GM12878 (cell line): ENCODE measurements at regions of chr15 and their contacts with region 1.

Region 1: DNA sequence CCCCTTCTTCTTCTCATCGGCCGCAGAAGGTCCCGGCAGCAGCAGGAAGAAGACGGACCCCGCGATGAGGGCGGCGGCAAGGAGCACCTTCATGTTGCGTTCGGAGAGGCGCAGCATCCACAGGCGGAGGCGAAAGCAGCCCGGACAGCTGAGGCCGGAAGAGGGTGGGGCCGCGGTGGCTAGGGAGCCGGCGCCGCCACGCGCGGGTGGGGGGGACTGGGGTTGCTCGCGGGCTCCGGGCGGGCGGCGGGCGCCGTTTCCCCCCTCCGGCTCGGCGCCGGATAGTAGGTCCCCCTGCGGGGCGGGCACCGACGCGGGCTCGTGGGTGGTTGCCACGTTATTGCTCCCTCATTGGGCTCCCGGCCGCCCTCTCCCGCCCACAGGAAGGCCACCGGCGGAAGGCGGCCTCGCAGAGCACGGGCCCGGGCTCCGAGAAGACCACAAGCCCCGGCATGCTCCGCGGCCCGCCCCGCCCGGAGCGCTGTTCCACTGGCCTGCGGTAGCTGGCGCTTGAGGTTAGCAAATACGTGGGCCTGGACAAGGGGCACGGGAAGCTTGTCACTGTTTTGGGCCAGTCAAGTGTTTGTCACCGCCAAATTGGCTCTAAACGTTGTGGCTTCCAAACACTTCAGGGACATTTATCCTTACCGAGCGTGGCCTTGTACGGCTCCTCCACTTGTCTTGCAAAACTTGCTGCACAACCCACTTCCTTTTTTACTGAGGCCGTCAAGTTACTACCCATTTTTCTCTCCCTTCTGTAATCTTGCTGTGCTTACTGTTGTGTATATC is at the start of gene PPIB:
- DNase-seq: peak; percentile 91
- ATAC-seq: peak; percentile 95
- H3K4me3 ChIP-seq: peak within 1 kb of the TSS; percentile 84
- H3K27ac ChIP-seq: peak within 1 kb of the TSS; percentile 81
- H3K4me1 ChIP-seq: peaks cover 30% of the 10 kb centered on the region
- H3K27me3 ChIP-seq: no peaks in the 10 kb centered on the region
- CTCF ChIP-seq: peak; percentile 47 to 73 (median 54)
- EP300 ChIP-seq: no peak
- POLR2A ChIP-seq: peak; percentile 99
- RAD21 ChIP-seq: peak; percentile 67
- polyA plus RNA-seq, gene PPIB: 831 to 858 TPM

Region 2: GRCh38 chr15:64066475-64066874 is 96.6 kb before region 1 on chr15:
- CTCF ChIA-PET with region 1: no interaction called
- POLR2A ChIA-PET with region 1: no interaction called
- RAD21 ChIA-PET with region 1: no interaction called
- SMC1A ChIA-PET with region 1: no interaction called
- in situ Hi-C with region 1: no loop called
- intact Hi-C with region 1: no loop called
- DNase-seq: no peak
- ATAC-seq: no peak
- H3K4me3 ChIP-seq: no peak overlapping the region
- H3K27ac ChIP-seq: no peak overlapping the region
- H3K4me1 ChIP-seq: peaks cover 13% of the 10 kb centered on the region
- H3K27me3 ChIP-seq: no peaks in the 10 kb centered on the region
- CTCF ChIP-seq: no peak
- EP300 ChIP-seq: no peak
- POLR2A ChIP-seq: no peak
- RAD21 ChIP-seq: no peak

Region 3: GRCh38 chr15:64131547-64131946 is 31.5 kb before region 1 on chr15:
- CTCF ChIA-PET with region 1: interaction called, 4 read pairs
- POLR2A ChIA-PET with region 1: interaction called, 11 read pairs
- RAD21 ChIA-PET with region 1: no interaction called
- SMC1A ChIA-PET with region 1: no interaction called
- in situ Hi-C with region 1: no loop called
- intact Hi-C with region 1: no loop called
- DNase-seq: no peak
- ATAC-seq: no peak
- H3K4me3 ChIP-seq: no peak overlapping the region
- H3K27ac ChIP-seq: no peak overlapping the region
- H3K4me1 ChIP-seq: no peaks in the 10 kb centered on the region
- H3K27me3 ChIP-seq: no peaks in the 10 kb centered on the region
- CTCF ChIP-seq: no peak
- EP300 ChIP-seq: no peak
- POLR2A ChIP-seq: no peak
- RAD21 ChIP-seq: no peak

Region 4: DNA sequence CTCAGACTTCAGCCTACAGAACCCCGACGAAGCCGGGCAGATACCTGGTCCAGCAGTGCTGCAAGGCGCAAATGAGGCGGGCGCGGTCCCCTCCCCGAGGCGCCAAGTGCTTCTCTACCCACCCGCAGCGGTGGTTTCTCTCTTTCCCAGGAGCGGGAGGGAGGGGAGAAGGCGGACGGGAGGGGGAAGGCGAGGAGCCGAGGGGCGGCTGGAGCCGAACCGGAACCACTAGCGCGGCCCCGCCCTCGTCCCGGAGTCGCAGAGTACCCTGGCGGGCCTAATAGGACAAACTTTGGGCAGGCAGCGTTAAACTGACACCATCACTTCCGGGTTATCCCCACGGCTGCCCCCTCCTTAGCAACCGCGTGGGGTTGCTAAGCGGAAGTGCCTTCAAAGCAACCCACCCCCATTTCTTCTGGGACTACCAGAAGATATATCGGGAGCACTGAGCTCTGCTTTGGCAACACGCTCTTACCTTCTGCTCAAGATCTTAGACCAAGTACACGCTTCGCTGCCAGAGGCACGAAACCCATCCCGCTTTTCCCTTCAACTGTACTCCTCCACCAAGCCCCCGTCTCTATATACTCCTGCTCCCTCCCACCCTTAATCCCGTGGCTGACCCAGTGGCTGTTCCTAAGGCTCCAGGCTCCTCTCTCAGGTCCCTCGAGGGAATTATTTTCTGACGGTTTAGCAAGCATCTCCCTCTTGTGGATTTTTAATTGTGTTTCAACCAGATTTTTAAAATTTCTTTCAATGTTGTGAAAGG is 193.1 kb after region 1 on chr15 and contains the start of gene CSNK1G1:
- CTCF ChIA-PET with region 1: interaction called, 3 read pairs
- POLR2A ChIA-PET with region 1: interaction called, 5 read pairs
- RAD21 ChIA-PET with region 1: interaction called, 5 read pairs
- SMC1A ChIA-PET with region 1: interaction called, 3 read pairs
- in situ Hi-C with region 1: no loop called
- intact Hi-C with region 1: loop called (anchors 5 kb)
- DNase-seq: peak; percentile 90
- ATAC-seq: peak; percentile 99
- H3K4me3 ChIP-seq: peak within 1 kb of the TSS; percentile 77
- H3K27ac ChIP-seq: peak within 1 kb of the TSS; percentile 64
- H3K4me1 ChIP-seq: peaks cover 3% of the 10 kb centered on the region; the same call in 1 of the 2 replicates
- H3K27me3 ChIP-seq: no peaks in the 10 kb centered on the region
- CTCF ChIP-seq: peak in 2 of 3 experiments; percentile 8 to 46; a peak in 2 of 6 replicates
- EP300 ChIP-seq: no peak; a peak in 1 of 4 replicates
- POLR2A ChIP-seq: peak; percentile 72
- RAD21 ChIP-seq: peak; percentile 45
- polyA plus RNA-seq, gene CSNK1G1: 6.1 to 6.2 TPM

Region 5: GRCh38 chr15:64387562-64388168 is 224.6 kb after region 1 on chr15 and contains the start of gene TRIP4:
- CTCF ChIA-PET with region 1: interaction called, 8 read pairs
- POLR2A ChIA-PET with region 1: no interaction called
- RAD21 ChIA-PET with region 1: interaction called, 3 read pairs
- SMC1A ChIA-PET with region 1: interaction called, 5 read pairs
- in situ Hi-C with region 1: no loop called
- intact Hi-C with region 1: loop called (anchors 1 kb)
- DNase-seq: peak; percentile 92
- ATAC-seq: peak; percentile 100
- H3K4me3 ChIP-seq: peak within 1 kb of the TSS; percentile 92
- H3K27ac ChIP-seq: peak within 1 kb of the TSS; percentile 71
- H3K4me1 ChIP-seq: no peaks in the 10 kb centered on the region
- H3K27me3 ChIP-seq: no peaks in the 10 kb centered on the region
- CTCF ChIP-seq: no peak; a peak in 1 of 6 replicates
- EP300 ChIP-seq: 0 out of 4 replicates have a peak, but pooled peaks of 1 of the 2 experiments have one; percentile 11
- POLR2A ChIP-seq: peak; percentile 97
- RAD21 ChIP-seq: peak; percentile 51; the same call in 1 of the 2 replicates
- polyA plus RNA-seq, gene TRIP4: 20.0 to 23.8 TPM